Activated CD4-positive, alpha-beta memory T cell treated with anti-CD3 and anti-CD28 coated beads for 36 hours (primary cell): ENCODE measurements at regions of chr15 and their contacts with region 1.

Region 1: DNA sequence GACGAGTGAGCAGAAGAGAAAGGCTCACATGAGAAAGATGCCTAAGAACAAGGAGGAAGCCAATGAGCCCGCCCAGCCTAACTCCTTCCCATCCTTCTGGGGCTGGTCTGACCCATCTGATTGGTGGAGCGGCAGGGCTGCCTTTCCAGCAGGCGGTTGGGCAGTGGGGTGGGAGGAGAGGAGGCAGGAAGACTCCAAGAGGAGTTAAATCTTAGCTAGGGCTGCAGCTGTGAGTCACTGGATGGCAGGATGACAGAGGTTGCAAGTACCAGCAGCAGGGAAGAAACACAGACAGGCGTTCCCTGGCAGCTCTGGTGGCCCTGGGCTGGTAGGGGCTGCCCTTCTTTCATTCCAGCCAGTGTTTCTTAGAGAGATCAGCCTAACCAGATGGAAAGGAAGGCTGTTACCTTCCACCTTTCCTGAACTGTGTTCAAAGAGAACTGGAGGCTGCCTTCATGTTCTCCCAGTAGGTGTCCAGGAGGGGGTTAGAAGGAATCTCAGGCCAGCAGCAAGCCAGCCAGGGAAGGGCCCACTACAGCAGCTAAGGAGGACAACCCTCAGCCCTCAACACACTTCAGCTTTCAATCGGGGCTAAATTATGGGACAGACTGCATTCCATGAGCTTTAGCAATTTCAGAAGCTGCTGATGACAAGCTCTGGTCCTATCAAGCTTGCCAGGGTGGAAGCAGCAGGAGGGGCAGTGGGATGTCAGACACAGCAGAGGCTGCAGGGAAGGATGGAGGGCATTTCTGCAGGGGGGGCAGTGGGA is 50.3 kb downstream of the CHSY1 start:
- DNase-seq: peak; percentile 56
- H3K4me3 Mint-ChIP-seq: no peak overlapping the region
- H3K27ac Mint-ChIP-seq: peak overlapping the region; percentile 57
- H3K4me1 Mint-ChIP-seq: peaks cover 83% of the 10 kb centered on the region
- H3K27me3 Mint-ChIP-seq: no peaks in the 10 kb centered on the region

Region 2: DNA sequence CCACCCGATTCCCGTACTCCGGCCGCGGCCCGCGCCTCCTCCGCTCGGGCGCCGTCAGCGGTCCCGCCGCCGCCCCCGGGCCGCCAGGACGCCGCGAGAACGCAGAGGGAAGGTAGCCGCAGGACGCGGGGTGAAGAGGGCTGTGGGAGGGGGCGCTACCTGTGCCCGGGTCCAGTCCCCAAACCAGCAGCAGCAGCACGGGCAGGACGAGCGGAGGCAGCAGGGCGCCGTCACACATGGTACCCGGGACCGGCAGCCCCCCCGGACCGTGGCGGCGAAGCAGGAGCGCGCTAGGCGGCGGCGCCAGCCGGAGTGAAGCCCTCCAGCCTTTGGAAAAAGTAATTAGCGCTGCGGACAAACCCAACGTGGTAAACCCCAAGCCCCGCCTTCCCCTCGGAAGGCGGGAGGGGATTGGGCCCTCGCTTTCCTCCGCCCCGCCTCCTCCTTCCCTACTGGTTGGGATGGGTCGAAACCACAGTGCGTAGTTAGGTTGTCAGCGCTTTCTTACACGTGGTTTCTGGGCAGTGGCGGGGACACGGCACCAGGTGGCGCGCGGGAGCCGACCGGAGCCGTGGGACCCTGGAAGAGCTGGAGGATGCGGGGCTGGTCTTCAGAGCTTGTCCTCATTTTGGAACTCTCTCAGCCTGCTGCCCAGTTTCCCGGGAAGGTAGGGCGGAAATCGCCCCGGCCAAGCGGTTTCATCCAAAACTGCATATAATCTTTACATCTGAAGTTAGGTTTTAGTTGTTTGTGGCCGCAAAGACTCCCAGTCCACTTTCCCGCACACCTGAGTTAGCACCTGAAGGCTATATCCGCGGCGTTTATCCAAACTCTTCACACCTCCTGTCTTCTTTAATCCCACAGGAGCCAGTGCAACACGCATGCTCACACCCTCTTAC is 859.7 kb before region 1 on chr15 and contains the start of gene ADAMTS17:
- CTCF ChIA-PET with region 1: no interaction called
- POLR2A ChIA-PET with region 1: no interaction called
- intact Hi-C with region 1: loop called (anchors 5 kb)
- DNase-seq: peak; percentile 95
- H3K4me3 Mint-ChIP-seq: peak within 1 kb of the TSS; percentile 54
- H3K27ac Mint-ChIP-seq: no peak within 1 kb of the TSS
- H3K4me1 Mint-ChIP-seq: peaks cover 15% of the 10 kb centered on the region
- H3K27me3 Mint-ChIP-seq: no peaks in the 10 kb centered on the region
- total RNA-seq, gene ADAMTS17: 0.99 to 1.2 TPM

Region 3: DNA sequence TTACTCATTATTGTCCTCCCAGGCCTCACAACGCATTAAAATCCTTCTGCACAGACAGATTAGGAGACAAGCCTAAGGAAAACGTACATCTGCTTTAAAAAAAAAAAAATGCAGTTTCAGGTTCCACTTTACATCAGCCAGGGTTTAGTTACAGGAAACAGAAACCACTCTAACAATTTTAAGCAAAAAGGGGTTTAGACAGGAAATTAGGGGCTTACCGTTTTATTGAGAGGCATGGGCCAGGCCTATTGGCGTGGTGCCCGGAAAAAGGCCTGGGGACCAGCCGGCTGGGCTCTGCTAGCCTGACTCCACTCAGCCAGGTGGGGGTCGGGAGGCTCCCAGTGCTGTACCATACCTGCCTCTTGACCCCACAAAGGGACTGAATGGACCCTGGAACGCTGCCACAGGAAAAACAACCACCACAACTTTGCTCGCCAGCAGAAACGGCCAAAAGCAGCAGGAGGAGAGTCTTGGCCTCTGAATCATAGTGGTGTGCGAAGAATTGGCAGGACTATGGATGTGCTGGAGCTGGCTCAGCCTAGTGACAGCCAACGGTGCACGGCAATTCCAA is 74.0 kb before region 1 on chr15:
- CTCF ChIA-PET with region 1: no interaction called
- POLR2A ChIA-PET with region 1: interaction called, 4 read pairs
- intact Hi-C with region 1: loop called (anchors 1 kb)
- DNase-seq: peak; percentile 67
- H3K4me3 Mint-ChIP-seq: peak overlapping the region; percentile 53
- H3K27ac Mint-ChIP-seq: peak overlapping the region; percentile 91
- H3K4me1 Mint-ChIP-seq: peaks cover 50% of the 10 kb centered on the region
- H3K27me3 Mint-ChIP-seq: peaks cover 4% of the 10 kb centered on the region

Region 4: GRCh38 chr15:101167753-101168463 is 33.7 kb before region 1 on chr15:
- CTCF ChIA-PET with region 1: no interaction called
- POLR2A ChIA-PET with region 1: interaction called, 4 read pairs
- intact Hi-C with region 1: loop called (anchors 1 kb)
- DNase-seq: peak; percentile 88
- H3K4me3 Mint-ChIP-seq: peak overlapping the region; percentile 44
- H3K27ac Mint-ChIP-seq: peak overlapping the region; percentile 87
- H3K4me1 Mint-ChIP-seq: peaks cover 21% of the 10 kb centered on the region
- H3K27me3 Mint-ChIP-seq: no peaks in the 10 kb centered on the region

Region 5: GRCh38 chr15:101242160-101242998 is 40.8 kb after region 1 on chr15:
- CTCF ChIA-PET with region 1: interaction called, 6 read pairs
- POLR2A ChIA-PET with region 1: interaction called, 44 read pairs
- intact Hi-C with region 1: loop called (anchors 1 kb)
- DNase-seq: peak; percentile 68
- H3K4me3 Mint-ChIP-seq: peak overlapping the region; percentile 50
- H3K27ac Mint-ChIP-seq: peak overlapping the region; percentile 82
- H3K4me1 Mint-ChIP-seq: peaks cover 83% of the 10 kb centered on the region
- H3K27me3 Mint-ChIP-seq: no peaks in the 10 kb centered on the region

Region 6: GRCh38 chr15:101540480-101541239 is 339.1 kb after region 1 on chr15:
- CTCF ChIA-PET with region 1: no interaction called
- POLR2A ChIA-PET with region 1: no interaction called
- intact Hi-C with region 1: no loop called
- DNase-seq: no peak
- H3K4me3 Mint-ChIP-seq: no peak overlapping the region
- H3K27ac Mint-ChIP-seq: no peak overlapping the region
- H3K4me1 Mint-ChIP-seq: no peaks in the 10 kb centered on the region
- H3K27me3 Mint-ChIP-seq: peaks cover 2% of the 10 kb centered on the region